ENCODE measurements at regions of chrX and their contacts with region 1.

Region 1: GRCh38 chrX:155755706-155756337 is 125.3 kb upstream of the VAMP7 start:
- DNase-seq: no peak
- ATAC-seq: peak; percentile 67

Region 2: GRCh38 chrX:154804957-154805695 is 950.7 kb before region 1 on chrX and contains the start of gene MPP1:
- intact Hi-C with region 1: no loop called
- DNase-seq: peak; percentile 85
- ATAC-seq: peak; percentile 99
- total RNA-seq, gene MPP1: 40.7 TPM

Region 3: GRCh38 chrX:155577681-155578080 is 178.1 kb before region 1 on chrX:
- intact Hi-C with region 1: no loop called
- DNase-seq: no peak
- ATAC-seq: no peak

Region 4: DNA sequence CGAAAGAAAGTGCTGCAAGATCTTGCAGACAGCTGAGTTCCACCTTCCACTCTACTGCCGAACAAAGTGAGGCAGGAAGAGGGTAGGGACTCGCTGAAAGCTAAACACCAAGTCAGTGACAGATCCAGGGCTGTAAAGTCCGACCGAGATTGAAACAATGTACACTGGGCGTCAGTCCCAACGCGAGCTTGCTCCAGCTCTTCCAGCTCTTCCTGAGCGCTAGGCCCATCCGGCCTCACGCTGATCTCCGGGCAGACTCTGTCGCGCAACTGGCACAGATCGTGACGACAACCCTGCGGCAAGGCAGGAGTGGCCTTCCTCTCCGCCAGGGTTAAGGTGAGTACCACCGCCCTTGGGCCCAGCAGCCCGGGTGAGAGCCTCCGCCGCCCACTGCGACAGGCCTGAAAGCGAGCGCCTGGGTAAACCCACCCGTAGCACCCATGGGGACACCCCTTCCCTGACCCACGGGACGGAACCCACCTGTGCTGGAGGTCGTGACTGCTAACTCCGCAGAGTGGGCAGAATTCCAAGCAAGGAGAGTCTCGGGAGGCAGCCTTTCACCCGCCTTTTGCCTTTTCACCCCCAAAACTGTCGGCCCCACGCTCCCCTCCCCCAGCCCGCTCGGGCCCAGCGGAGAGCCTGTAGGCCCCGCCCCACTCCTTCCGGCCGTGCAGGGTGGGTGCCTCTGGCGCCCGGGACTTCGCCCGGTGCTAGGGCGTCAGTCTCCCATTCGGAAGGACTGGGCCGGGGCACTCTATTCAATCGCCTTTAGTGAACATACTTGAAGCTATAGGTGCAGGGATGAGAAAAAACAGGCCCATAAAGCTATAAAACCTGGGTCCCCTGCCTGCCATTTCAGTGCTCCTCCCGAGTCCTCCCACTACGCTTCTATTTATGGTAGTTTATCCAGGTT is 143.3 kb before region 1 on chrX and contains the start of gene TMLHE:
- intact Hi-C with region 1: loop called (anchors 5 kb)
- DNase-seq: peak; percentile 80
- ATAC-seq: peak; percentile 97
- total RNA-seq, gene TMLHE: 38.8 TPM

Region 5: DNA sequence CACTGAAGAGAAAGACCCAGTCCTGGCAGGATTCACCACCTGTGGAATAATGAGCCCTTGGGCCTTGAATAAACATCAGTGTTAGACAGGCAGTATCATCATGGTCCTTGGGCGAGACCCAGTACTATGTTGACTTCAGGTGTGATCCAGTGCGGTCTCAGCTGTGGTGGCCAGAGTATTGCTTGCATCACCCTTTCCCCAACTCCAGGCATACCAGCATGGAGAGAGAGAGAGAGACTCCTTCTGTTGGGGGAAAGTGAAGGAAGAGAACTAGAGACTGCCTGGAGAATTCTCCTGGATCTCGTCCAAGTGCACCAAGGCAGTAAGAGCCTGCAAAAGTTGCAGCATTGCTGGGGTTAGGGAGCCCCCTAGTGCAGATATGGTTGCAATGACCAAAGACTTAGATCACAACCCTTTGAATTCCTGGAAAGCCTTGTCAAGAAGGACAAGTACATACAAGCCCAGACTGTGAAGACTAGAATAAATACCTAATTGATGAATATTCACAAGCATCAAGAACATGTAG is 64.2 kb after region 1 on chrX:
- intact Hi-C with region 1: no loop called
- DNase-seq: no peak
- ATAC-seq: peak; percentile 72

Region 6: GRCh38 chrX:155841232-155841631 is 85.4 kb after region 1 on chrX:
- intact Hi-C with region 1: no loop called
- DNase-seq: no peak
- ATAC-seq: no peak

Measured in Right ventricle myocardium inferior (tissue), 1 donor.